ENCODE measurements at regions of chr4 and their contacts with region 1.

Region 1: DNA sequence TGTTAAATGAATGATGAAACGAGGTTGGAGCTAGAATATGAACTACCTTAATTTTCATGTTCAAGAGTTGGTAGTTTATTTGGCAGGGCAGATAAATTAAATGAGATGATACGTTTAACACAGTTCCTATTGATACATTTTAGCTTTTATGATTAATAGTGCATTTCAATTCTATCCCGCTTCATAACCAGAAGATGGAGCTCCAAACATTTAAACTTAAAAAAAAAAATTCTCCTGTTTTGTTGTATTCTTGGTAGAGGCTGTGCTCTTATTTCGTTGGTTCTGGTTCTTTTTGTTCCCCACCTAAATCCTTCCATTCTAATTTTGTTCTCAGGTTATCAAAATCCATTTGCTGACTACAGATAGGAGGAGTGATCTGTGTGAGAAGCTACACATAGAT is 71.8 kb upstream of the PTPN13 start:
- DNase-seq: no peak
- ATAC-seq: no peak
- H3K4me3 Mint-ChIP-seq: no peak overlapping the region
- H3K27ac Mint-ChIP-seq: no peak overlapping the region
- H3K4me1 Mint-ChIP-seq: no peaks in the 10 kb centered on the region
- H3K27me3 Mint-ChIP-seq: peaks cover 15% of the 10 kb centered on the region

Region 2: GRCh38 chr4:86508436-86508835 is 13.9 kb before region 1 on chr4:
- CTCF ChIA-PET with region 1: interaction called, 11 read pairs
- POLR2A ChIA-PET with region 1: no interaction called
- intact Hi-C with region 1: no loop called
- DNase-seq: no peak
- ATAC-seq: no peak
- H3K4me3 Mint-ChIP-seq: no peak overlapping the region
- H3K27ac Mint-ChIP-seq: no peak overlapping the region
- H3K4me1 Mint-ChIP-seq: no peaks in the 10 kb centered on the region
- H3K27me3 Mint-ChIP-seq: peaks cover 5% of the 10 kb centered on the region

Region 3: GRCh38 chr4:87433342-87433741 is 911.0 kb after region 1 on chr4:
- CTCF ChIA-PET with region 1: no interaction called
- POLR2A ChIA-PET with region 1: no interaction called
- intact Hi-C with region 1: no loop called
- DNase-seq: no peak
- ATAC-seq: no peak
- H3K4me3 Mint-ChIP-seq: no peak overlapping the region
- H3K27ac Mint-ChIP-seq: no peak overlapping the region
- H3K4me1 Mint-ChIP-seq: peaks cover 28% of the 10 kb centered on the region
- H3K27me3 Mint-ChIP-seq: no peaks in the 10 kb centered on the region

Measured in activated CD4-positive, alpha-beta T cell treated with anti-CD3 and anti-CD28 coated beads for 36 hours (primary cell).